ENCODE measurements at regions of chr3 and their contacts with region 1.

Region 1: GRCh38 chr3:171840811-171841619 is 2.1 kb upstream of the TMEM212 start:
- DNase-seq: no peak
- H3K4me3 ChIP-seq: no peak overlapping the region
- H3K27ac ChIP-seq: no peak overlapping the region
- H3K4me1 ChIP-seq: peaks cover 19% of the 10 kb centered on the region
- H3K27me3 ChIP-seq: no peaks in the 10 kb centered on the region
- CTCF ChIP-seq: no peak

Region 2: DNA sequence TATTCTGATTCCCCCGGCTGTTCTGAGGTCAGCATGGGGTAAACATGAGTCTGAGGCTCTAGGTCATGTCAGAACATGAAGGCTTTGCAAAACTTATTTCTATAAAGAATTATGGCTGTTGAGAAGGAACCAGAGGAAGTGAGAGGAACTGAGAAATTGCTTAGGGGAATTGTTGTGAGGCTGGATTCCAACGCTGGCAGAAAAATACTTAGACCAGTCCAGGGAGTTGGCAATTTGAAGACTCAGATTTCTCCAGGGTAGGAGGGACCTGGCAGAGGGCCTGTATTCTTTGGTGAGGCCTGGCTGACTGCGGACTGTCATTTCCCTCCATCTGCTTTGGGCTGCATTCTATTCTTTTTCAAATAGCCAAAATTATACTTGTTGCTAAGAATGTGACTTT is 186.2 kb before region 1 on chr3:
- CTCF ChIA-PET with region 1: no interaction called
- POLR2A ChIA-PET with region 1: interaction called, 21 read pairs
- intact Hi-C with region 1: no loop called
- DNase-seq: peak in 1 of 2 experiments; percentile 6
- H3K4me3 ChIP-seq: no peak overlapping the region
- H3K27ac ChIP-seq: no peak overlapping the region
- H3K4me1 ChIP-seq: no peaks in the 10 kb centered on the region
- H3K27me3 ChIP-seq: no peaks in the 10 kb centered on the region
- CTCF ChIP-seq: no peak

Region 3: GRCh38 chr3:171851680-171852058 is 10.7 kb after region 1 on chr3:
- CTCF ChIA-PET with region 1: no interaction called
- POLR2A ChIA-PET with region 1: no interaction called
- intact Hi-C with region 1: no loop called
- DNase-seq: peak in 1 of 2 experiments; percentile 35
- H3K4me3 ChIP-seq: no peak overlapping the region
- H3K27ac ChIP-seq: no peak overlapping the region
- H3K4me1 ChIP-seq: no peaks in the 10 kb centered on the region
- H3K27me3 ChIP-seq: no peaks in the 10 kb centered on the region
- CTCF ChIP-seq: no peak

Region 4: DNA sequence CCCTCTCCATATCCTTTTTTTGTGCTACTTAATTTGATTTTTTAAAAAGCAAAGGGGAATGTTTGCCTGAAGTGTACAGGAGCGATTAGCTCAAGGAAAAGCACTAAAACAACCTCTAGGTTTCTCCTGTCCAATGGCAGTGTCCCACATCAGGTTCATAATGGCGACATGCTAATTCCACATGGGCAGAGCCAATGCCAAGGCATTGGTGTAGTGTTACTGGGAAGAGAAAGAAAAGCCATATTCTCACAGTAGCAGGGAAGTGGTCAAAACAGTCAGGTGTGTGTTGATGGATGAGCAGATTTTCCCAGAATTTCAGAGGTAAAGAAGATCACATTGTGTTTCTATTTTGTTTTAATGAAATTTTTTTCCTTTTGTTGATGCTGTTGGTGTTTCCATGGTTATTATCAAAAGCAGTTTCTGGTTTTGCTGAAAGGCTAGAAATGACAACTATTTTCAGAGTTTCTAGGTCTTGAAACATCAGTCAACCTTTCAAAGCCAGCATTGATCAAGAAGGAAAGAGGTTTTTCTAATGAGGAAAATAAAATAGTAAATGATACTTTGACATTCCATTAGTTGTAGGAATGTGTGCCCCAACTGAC is 263.6 kb after region 1 on chr3:
- CTCF ChIA-PET with region 1: no interaction called
- POLR2A ChIA-PET with region 1: interaction called, 10 read pairs
- intact Hi-C with region 1: no loop called
- DNase-seq: no peak
- H3K4me3 ChIP-seq: no peak overlapping the region
- H3K27ac ChIP-seq: no peak overlapping the region
- H3K4me1 ChIP-seq: peaks cover 45% of the 10 kb centered on the region
- H3K27me3 ChIP-seq: no peaks in the 10 kb centered on the region
- CTCF ChIP-seq: no peak

Measured in PC-9 (cell line).